AG04449 (cell line): ENCODE measurements at regions of chr19 and their contacts with region 1.

Region 1: DNA sequence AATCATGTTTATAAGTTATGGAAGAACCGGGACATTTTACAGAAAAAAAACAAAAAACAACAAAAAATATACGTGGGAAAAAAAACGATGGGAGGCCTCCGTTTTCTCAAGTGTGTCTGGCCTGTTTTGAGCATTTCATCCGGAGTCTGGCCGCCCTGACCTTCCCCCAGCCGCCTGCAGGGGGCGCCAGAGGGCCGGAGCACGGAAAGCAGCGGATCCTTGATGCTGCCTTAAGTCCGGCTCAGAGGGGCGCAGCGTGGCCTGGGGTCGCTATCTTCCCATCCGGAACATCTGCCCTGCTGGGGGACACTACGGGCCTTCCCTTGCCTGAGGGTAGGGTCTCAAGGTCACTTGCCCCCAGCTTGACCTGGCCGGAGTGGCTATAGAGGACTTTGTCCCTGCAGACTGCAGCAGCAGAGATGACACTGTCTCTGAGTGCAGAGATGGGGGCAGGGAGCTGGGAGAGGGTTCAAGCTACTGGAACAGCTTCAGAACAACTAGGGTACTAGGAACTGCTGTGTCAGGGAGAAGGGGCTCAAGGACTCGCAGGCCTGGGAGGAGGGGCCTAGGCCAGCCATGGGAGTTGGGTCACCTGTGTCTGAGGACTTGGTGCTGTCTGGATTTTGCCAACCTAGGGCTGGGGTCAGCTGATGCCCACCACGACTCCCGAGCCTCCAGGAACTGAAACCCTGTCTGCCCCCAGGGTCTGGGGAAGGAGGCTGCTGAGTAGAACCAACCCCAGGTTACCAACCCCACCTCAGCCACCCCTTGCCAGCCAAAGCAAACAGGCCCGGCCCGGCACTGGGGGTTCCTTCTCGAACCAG is 1.8 kb upstream of the APOE start:
- DNase-seq: no peak
- H3K4me3 ChIP-seq: no peak overlapping the region
- CTCF ChIP-seq: peak; percentile 97

Region 2: GRCh38 chr19:44845612-44846454 is 58.0 kb before region 1 on chr19 and contains the start of gene NECTIN2:
- CTCF ChIA-PET with region 1: no interaction called
- POLR2A ChIA-PET with region 1: no interaction called
- DNase-seq: peak; percentile 88
- H3K4me3 ChIP-seq: peak within 1 kb of the TSS; percentile 89
- CTCF ChIP-seq: peak; percentile 72

Region 3: GRCh38 chr19:44883922-44884321 is 19.9 kb before region 1 on chr19:
- CTCF ChIA-PET with region 1: interaction called, 11 read pairs
- POLR2A ChIA-PET with region 1: no interaction called
- DNase-seq: no peak
- H3K4me3 ChIP-seq: no peak overlapping the region
- CTCF ChIP-seq: no peak

Region 4: DNA sequence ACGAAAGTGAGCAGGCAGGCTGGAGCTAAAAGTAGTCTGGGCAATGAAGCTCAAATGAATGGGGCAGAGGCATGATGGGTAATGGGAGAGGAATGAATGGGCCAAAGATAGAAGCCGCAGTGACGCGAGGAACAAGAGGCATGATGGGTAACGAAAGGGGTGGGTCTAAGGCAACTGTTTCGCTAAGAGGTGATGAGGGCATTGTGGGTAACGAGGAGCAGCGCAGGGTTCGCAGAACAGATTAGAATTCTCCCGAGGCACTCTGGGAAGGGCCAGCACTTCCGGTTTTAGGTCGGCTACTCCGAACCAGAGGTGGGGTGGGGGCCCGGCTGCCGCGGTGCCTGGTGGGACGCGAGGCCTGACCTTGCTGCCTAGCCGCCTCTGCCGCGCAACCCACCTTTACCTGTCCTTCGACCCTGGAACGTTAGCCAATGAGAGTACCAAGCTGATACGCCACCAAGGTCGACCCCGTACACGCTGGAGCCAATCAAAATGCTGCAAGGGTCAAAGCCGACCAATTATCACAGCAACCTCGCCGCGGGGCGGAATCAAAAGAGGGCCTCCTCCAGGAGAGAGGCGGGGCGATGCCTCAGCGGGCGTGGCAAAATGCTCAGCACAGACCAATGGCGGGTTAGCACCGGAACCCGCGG is 13.3 kb before region 1 on chr19:
- CTCF ChIA-PET with region 1: interaction called, 22 read pairs
- POLR2A ChIA-PET with region 1: interaction called, 4 read pairs
- DNase-seq: peak; percentile 98
- H3K4me3 ChIP-seq: peak overlapping the region; percentile 68
- CTCF ChIP-seq: no peak

Region 5: GRCh38 chr19:45187421-45188100 is 283.7 kb after region 1 on chr19:
- CTCF ChIA-PET with region 1: no interaction called
- POLR2A ChIA-PET with region 1: no interaction called
- DNase-seq: no peak
- H3K4me3 ChIP-seq: no peak overlapping the region
- CTCF ChIP-seq: peak; percentile 21